ENCODE measurements at regions of chr15 and their contacts with region 1.

Region 1: DNA sequence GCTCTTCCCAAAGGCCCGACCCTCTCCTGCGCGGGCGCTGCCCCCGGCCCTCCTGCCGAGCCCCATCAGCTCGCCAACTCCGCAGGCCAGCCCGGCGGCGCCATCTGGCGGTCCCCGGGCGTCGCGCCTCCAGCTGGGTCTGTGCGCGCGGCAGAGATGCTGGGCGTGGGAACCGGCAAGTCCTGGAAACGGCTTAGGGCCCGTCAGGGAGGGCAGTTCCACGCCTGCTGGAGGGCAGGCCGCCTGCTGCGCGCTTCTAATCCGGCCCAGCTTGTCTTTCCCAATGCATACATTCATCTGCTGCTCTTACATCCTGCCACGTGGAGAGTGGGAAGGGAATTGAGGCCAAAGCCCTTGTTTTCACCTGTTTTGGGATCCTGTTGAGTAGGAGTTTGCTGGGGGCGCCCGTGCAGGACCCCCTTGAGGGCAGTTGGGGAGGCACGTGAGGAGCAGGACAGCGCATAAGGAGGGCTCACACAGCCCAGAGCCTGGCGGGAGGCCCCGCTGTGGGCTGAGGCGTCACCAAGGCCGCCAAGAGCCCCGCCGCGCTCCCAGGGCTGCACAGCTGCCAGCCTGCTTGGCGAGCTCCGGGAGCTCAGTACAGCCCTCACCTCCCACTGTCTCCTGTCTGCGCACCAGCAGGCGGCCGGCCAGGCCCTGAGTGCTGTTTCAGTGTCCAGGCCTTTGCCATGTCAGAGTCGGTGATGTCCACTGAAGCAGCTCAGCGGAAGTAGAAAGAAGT is 165.6 kb downstream of the NSMCE3 start:
- DNase-seq: peak; percentile 78
- ATAC-seq: peak; percentile 92
- H3K4me3 Mint-ChIP-seq: no peak overlapping the region
- H3K27ac Mint-ChIP-seq: no peak overlapping the region
- H3K4me1 Mint-ChIP-seq: no peaks in the 10 kb centered on the region
- H3K27me3 Mint-ChIP-seq: no peaks in the 10 kb centered on the region

Region 2: GRCh38 chr15:28086175-28086703 is 1017.8 kb before region 1 on chr15:
- CTCF ChIA-PET with region 1: no interaction called
- POLR2A ChIA-PET with region 1: no interaction called
- intact Hi-C with region 1: no loop called
- DNase-seq: peak; percentile 70
- ATAC-seq: peak; percentile 98
- H3K4me3 Mint-ChIP-seq: no peak overlapping the region
- H3K27ac Mint-ChIP-seq: no peak overlapping the region
- H3K4me1 Mint-ChIP-seq: peaks cover 4% of the 10 kb centered on the region
- H3K27me3 Mint-ChIP-seq: peaks cover 44% of the 10 kb centered on the region

Region 3: GRCh38 chr15:28786521-28786920 is 317.5 kb before region 1 on chr15:
- CTCF ChIA-PET with region 1: no interaction called
- POLR2A ChIA-PET with region 1: no interaction called
- intact Hi-C with region 1: loop called in 1 of 2 experiments (anchors 10 kb)
- DNase-seq: no peak
- ATAC-seq: no peak
- H3K4me3 Mint-ChIP-seq: no peak overlapping the region
- H3K27ac Mint-ChIP-seq: no peak overlapping the region
- H3K4me1 Mint-ChIP-seq: peaks cover 7% of the 10 kb centered on the region
- H3K27me3 Mint-ChIP-seq: peaks cover 13% of the 10 kb centered on the region

Region 4: GRCh38 chr15:29062179-29062591 is 41.8 kb before region 1 on chr15:
- CTCF ChIA-PET with region 1: no interaction called
- POLR2A ChIA-PET with region 1: no interaction called
- intact Hi-C with region 1: no loop called
- DNase-seq: no peak
- ATAC-seq: no peak
- H3K4me3 Mint-ChIP-seq: no peak overlapping the region
- H3K27ac Mint-ChIP-seq: no peak overlapping the region
- H3K4me1 Mint-ChIP-seq: peaks cover 36% of the 10 kb centered on the region
- H3K27me3 Mint-ChIP-seq: no peaks in the 10 kb centered on the region

Region 5: GRCh38 chr15:29081781-29082180 is 22.2 kb before region 1 on chr15:
- CTCF ChIA-PET with region 1: interaction called, 15 read pairs
- POLR2A ChIA-PET with region 1: no interaction called
- intact Hi-C with region 1: no loop called
- DNase-seq: no peak
- ATAC-seq: no peak
- H3K4me3 Mint-ChIP-seq: no peak overlapping the region
- H3K27ac Mint-ChIP-seq: no peak overlapping the region
- H3K4me1 Mint-ChIP-seq: peaks cover 5% of the 10 kb centered on the region
- H3K27me3 Mint-ChIP-seq: no peaks in the 10 kb centered on the region

Region 6: DNA sequence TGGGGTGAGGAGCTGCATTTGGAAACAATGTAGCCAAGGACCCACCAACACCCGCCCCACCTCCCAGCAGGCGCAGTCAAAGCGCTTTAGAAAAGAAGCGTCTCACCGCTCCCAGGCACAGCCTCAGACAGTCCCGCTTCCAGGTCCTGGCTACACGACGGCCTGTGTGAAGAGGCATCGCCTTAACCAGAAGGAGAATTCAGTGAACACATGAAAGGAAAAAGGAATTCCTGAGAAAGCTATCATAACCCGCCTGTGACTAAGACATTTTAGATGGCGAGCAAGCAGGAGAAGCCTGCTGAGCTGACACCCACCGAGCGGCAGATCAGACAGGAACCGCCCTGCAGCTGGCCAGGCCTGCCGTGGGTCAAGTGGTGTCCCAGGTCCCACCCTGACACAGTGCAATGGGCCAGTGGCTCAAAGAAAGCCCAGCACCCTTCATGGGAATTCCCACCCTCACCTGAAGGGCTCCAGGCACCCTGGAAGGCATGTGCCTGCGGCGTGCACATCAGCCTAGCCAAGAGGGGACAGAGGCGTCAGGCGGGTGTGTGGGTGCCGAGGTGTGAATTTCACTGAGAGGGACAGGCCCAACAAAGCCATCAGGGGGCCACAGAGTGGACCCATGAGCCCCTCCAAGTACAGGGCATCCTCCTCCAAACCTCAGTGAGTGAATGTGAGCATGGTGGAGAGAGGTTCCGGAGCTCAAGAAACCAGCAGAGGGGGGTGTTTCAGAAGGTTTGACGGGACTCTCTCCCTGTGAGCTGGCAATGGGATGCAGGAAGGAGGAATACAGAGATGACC is 20.8 kb after region 1 on chr15:
- CTCF ChIA-PET with region 1: interaction called, 13 read pairs
- POLR2A ChIA-PET with region 1: no interaction called
- intact Hi-C with region 1: no loop called
- DNase-seq: no peak
- ATAC-seq: no peak
- H3K4me3 Mint-ChIP-seq: no peak overlapping the region
- H3K27ac Mint-ChIP-seq: no peak overlapping the region
- H3K4me1 Mint-ChIP-seq: no peaks in the 10 kb centered on the region
- H3K27me3 Mint-ChIP-seq: no peaks in the 10 kb centered on the region